ENCODE measurements at regions of chr12 and their contacts with region 1.

Region 1: GRCh38 chr12:55955800-55956508 is 9.9 kb downstream of the PMEL start:
- DNase-seq: peak in 7 of 10 donors; percentile 11 to 79 (median 35)
- ATAC-seq: peak; percentile 71 to 81
- H3K4me3 Mint-ChIP-seq: no peak overlapping the region
- H3K27ac Mint-ChIP-seq: peak overlapping the region; percentile 56 to 87 (median 82)
- H3K4me1 Mint-ChIP-seq: peaks cover 16 to 43% (median 26%) of the 10 kb centered on the region in 4 donors
- H3K27me3 Mint-ChIP-seq: no peaks in the 10 kb centered on the region

Region 2: GRCh38 chr12:55932551-55932910 is 23.4 kb before region 1 on chr12:
- POLR2A ChIA-PET with region 1: interaction called, 14 read pairs
- DNase-seq: peak in 9 of 10 donors; percentile 31 to 78 (median 53)
- ATAC-seq: peak in 1 of 2 donors; percentile 22
- H3K4me3 Mint-ChIP-seq: peak overlapping the region; percentile 93 to 100 (median 98)
- H3K27ac Mint-ChIP-seq: peak overlapping the region; percentile 92 to 99 (median 98)
- H3K4me1 Mint-ChIP-seq: peaks cover 49 to 87% (median 66%) of the 10 kb centered on the region in 4 donors
- H3K27me3 Mint-ChIP-seq: no peaks in the 10 kb centered on the region

Measured in naive thymus-derived CD8-positive, alpha-beta T cell (primary cell).